ENCODE measurements at regions of chr11 and their contacts with region 1.

Region 1: GRCh38 chr11:61792310-61793085 is at the starts of genes FEN1 and TMEM258:
- DNase-seq: peak; percentile 89 to 94 (median 90)
- ATAC-seq: peak; percentile 91
- H3K4me3 ChIP-seq: peak within 1 kb of the TSS; percentile 83
- H3K27ac ChIP-seq: peak within 1 kb of the TSS; percentile 100
- H3K4me1 ChIP-seq: peaks cover 16 to 18% of the 10 kb centered on the region in 2 experiments; a peak in 4 of 5 replicates
- H3K27me3 ChIP-seq: no peaks in the 10 kb centered on the region
- CTCF ChIP-seq: no peak
- EP300 ChIP-seq: no peak
- POLR2A ChIP-seq: peak; percentile 94
- RAD21 ChIP-seq: no peak
- polyA plus RNA-seq, gene FEN1: 58.1 to 86.8 TPM
- polyA plus RNA-seq, gene TMEM258: 794 to 856 TPM

Region 2: GRCh38 chr11:61495801-61496597 is 296.5 kb before region 1 on chr11:
- CTCF ChIA-PET with region 1: no interaction called
- POLR2A ChIA-PET with region 1: no interaction called
- in situ Hi-C with region 1: no loop called
- intact Hi-C with region 1: no loop called
- DNase-seq: no peak
- ATAC-seq: no peak
- H3K4me3 ChIP-seq: no peak overlapping the region
- H3K27ac ChIP-seq: no peak overlapping the region
- H3K4me1 ChIP-seq: peaks cover 0 to 11% of the 10 kb centered on the region in 2 experiments; a peak in 3 of 5 replicates
- H3K27me3 ChIP-seq: peaks cover 0 to 44% of the 10 kb centered on the region in 2 experiments; a peak in 3 of 5 replicates
- CTCF ChIP-seq: no peak
- EP300 ChIP-seq: no peak
- POLR2A ChIP-seq: no peak
- RAD21 ChIP-seq: no peak

Region 3: DNA sequence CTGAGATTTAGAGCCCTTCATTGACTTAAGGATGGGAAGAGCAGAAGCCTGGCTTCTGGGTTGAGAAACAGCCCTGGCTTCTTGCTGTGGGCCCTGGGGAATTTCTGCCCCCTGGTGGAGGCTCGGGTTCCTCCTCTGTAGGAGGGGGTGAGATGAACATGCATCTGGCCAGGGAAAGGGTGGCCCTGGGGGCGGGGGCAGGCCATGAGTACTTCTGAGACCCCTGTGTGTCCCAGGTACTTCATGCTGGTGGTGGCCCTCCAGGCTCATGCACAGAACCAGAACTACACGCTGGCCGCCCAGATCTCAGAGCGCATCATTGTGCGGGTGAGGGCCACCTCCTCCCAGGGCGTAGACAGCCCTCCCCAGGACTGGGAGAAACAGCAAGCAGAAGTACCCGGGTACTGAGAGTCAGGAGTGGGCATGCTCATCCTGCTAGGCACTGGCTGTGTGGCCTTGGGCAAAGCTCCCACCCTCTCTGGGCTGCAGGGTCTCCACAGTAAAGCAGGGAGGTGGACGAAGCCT is 15.9 kb before region 1 on chr11:
- CTCF ChIA-PET with region 1: no interaction called
- POLR2A ChIA-PET with region 1: interaction called, 21 read pairs
- in situ Hi-C with region 1: no loop called
- intact Hi-C with region 1: no loop called
- DNase-seq: peak; percentile 84 to 90 (median 86)
- ATAC-seq: peak; percentile 94
- H3K4me3 ChIP-seq: no peak overlapping the region
- H3K27ac ChIP-seq: no peak overlapping the region
- H3K4me1 ChIP-seq: peaks cover 0 to 58% of the 10 kb centered on the region in 2 experiments; a peak in 2 of 5 replicates
- H3K27me3 ChIP-seq: no peaks in the 10 kb centered on the region
- CTCF ChIP-seq: peak; percentile 89 to 93 (median 92)
- EP300 ChIP-seq: no peak
- POLR2A ChIP-seq: no peak
- RAD21 ChIP-seq: peak; percentile 61 to 86

Region 4: DNA sequence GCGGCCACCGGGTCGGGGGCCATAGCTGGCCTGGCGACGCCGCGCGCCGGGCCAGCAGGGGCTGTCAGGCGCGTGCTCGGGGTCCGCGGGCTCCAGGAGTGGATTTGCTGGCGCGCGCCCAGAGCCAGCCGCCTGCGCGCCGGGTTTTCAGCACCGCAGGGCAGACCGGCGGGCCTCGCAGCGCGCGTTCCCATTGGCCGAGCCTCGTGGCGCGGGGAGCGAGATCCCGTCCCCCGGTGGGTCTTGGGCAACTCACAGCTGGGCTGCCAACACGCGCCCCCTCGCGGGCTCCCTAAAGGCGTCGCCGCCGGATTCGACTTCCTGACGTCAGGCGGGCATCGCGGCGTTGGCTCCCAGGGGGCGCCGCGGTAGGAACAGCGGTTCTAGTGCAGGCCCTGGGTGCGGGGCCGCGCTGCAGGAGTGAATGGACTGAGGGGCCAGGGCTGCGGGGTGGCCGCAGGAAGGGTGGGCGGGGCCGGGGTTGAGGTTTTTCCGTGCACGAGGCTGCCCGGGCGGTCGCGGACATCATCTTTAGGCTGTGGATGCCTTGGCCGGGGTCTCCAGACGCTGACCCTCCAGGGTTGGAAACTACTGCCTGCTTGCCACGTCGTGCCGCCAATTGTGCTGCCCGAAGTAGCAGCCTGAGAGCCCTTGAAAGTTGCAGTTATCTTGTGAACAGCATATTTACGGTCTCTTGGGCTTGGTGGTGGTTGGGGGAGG is 24.4 kb after region 1 on chr11 and contains the start of gene FADS1:
- CTCF ChIA-PET with region 1: interaction called, 3 read pairs
- POLR2A ChIA-PET with region 1: interaction called, 48 read pairs
- in situ Hi-C with region 1: no loop called
- intact Hi-C with region 1: no loop called
- DNase-seq: peak; percentile 95 to 97 (median 96)
- ATAC-seq: peak; percentile 71
- H3K4me3 ChIP-seq: peak within 1 kb of the TSS; percentile 64
- H3K27ac ChIP-seq: peak within 1 kb of the TSS; percentile 98
- H3K4me1 ChIP-seq: peaks cover 38 to 49% of the 10 kb centered on the region in 2 experiments; a peak in 4 of 5 replicates
- H3K27me3 ChIP-seq: no peaks in the 10 kb centered on the region; a peak in 1 of 5 replicates
- CTCF ChIP-seq: peak; percentile 72 to 93 (median 89)
- EP300 ChIP-seq: peak; percentile 42; the same call in 1 of the 2 replicates
- POLR2A ChIP-seq: no peak; the same call in 1 of the 2 replicates
- RAD21 ChIP-seq: peak; percentile 60; a peak in 3 of 4 replicates
- polyA plus RNA-seq, gene FADS1: 110 to 174 TPM

Region 5: DNA sequence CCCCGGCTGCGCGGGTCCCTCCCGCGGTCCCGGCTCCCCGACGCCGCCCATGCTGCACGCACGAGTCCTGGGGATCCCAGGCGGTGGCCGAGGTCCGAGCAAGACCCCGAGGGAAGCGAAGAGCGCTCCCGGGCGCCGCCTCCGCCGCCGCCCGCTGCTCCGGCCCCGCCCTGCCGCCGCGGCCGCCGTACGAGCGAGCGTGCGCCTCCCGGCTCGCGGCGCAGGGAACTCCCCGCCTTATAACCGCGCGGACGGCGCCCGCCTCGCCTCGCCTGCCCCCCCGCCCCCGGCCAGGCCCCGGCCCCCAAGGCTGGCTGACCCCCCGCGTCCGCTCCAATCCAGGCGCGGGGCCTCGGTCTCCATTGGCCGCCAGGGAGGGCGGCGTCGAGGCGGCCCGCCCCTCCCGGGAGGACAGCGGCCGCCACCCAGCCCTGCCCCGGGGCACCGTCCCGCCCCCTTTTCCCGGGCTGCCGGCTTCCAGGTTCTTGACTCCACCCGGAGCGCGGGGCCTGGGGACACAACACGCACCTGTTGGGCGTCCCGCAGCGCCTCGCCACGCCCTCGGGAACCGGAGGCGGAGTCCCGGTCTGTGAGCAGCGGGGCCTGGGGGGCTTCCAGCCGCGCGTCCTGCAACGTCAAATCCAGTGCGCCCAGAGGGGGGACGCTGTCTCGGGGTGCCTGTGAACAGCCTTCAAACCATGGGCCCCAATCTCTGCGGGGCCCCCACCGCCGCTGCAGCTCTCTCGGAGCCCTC is 99.0 kb after region 1 on chr11 and contains the start of gene FADS3:
- CTCF ChIA-PET with region 1: interaction called, 6 read pairs
- POLR2A ChIA-PET with region 1: interaction called, 5 read pairs
- in situ Hi-C with region 1: no loop called
- intact Hi-C with region 1: loop called (anchors 2 kb)
- DNase-seq: peak; percentile 90 to 98 (median 96)
- ATAC-seq: peak; percentile 95
- H3K4me3 ChIP-seq: peak within 1 kb of the TSS; percentile 64
- H3K27ac ChIP-seq: peak within 1 kb of the TSS; percentile 66
- H3K4me1 ChIP-seq: peaks cover 15 to 45% of the 10 kb centered on the region in 2 experiments
- H3K27me3 ChIP-seq: no peaks in the 10 kb centered on the region
- CTCF ChIP-seq: 0 out of 6 replicates have a peak, but pooled peaks of 2 of the 3 experiments have one; percentile 1 to 8
- EP300 ChIP-seq: no peak
- POLR2A ChIP-seq: no peak
- RAD21 ChIP-seq: no peak
- polyA plus RNA-seq, gene FADS3: 0.97 to 3.3 TPM

Region 6: GRCh38 chr11:61947486-61948210 is 155.2 kb after region 1 on chr11:
- CTCF ChIA-PET with region 1: no interaction called
- POLR2A ChIA-PET with region 1: interaction called, 16 read pairs
- in situ Hi-C with region 1: loop called (anchors 5 kb)
- intact Hi-C with region 1: loop called (anchors 2 kb)
- DNase-seq: peak; percentile 80 to 86 (median 82)
- ATAC-seq: peak; percentile 67
- H3K4me3 ChIP-seq: no peak overlapping the region
- H3K27ac ChIP-seq: no peak overlapping the region; the same call in 2 of the 3 replicates
- H3K4me1 ChIP-seq: peaks cover 20 to 27% of the 10 kb centered on the region in 2 experiments; a peak in 4 of 5 replicates
- H3K27me3 ChIP-seq: no peaks in the 10 kb centered on the region
- CTCF ChIP-seq: peak; percentile 98 to 99 (median 98)
- EP300 ChIP-seq: no peak
- POLR2A ChIP-seq: no peak
- RAD21 ChIP-seq: peak; percentile 99

Measured in K562 (cell line).